ENCODE measurements at regions of chr6 and their contacts with region 1.

Region 1: DNA sequence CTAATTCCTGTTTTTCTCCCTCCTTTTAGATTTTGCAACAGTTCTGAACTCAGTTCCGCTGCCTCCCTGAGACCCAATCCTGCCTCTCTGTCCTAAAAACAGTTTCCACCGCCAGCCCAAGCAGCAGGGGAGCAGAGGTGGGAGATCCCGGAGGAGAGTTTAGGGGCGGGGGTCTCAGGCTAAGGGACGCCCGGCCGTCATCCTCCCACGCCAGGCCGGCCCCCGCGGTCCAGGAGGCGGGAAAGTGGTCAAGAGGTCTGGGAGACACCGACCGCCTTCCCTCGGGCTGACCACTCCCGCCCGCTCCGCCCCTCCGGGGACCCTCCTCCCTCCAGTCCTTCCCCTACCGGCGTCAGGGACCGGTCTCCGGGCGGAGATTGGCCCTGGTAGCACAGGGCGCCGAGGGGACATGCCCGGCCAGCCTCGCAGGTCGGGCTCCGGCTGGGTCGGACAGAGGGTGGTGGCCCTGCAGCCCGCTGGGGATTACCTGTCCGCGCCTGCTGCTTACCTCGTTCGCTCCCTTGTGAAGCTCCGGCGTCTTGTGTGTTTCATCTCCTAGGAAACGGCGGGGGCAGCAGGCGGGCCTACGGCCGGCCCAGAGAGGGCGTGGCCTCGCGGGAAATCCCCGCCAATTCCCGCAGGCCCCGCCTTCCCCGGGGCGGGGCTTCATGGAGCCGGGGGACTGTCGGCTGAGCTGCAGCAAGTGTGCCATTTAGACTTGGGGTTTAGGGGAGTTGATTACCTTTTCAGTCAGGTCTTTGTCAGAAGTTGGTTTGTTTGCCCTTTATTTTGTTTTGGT is at the start of gene MAK:
- DNase-seq: peak; percentile 88
- H3K4me3 Mint-ChIP-seq: peak within 1 kb of the TSS; percentile 85
- H3K27ac Mint-ChIP-seq: peak within 1 kb of the TSS; percentile 99
- H3K4me1 Mint-ChIP-seq: peaks cover 23% of the 10 kb centered on the region
- H3K27me3 Mint-ChIP-seq: peaks cover 32% of the 10 kb centered on the region
- total RNA-seq, gene MAK: 0.67 and 0.73 TPM in 2 replicates

Region 2: DNA sequence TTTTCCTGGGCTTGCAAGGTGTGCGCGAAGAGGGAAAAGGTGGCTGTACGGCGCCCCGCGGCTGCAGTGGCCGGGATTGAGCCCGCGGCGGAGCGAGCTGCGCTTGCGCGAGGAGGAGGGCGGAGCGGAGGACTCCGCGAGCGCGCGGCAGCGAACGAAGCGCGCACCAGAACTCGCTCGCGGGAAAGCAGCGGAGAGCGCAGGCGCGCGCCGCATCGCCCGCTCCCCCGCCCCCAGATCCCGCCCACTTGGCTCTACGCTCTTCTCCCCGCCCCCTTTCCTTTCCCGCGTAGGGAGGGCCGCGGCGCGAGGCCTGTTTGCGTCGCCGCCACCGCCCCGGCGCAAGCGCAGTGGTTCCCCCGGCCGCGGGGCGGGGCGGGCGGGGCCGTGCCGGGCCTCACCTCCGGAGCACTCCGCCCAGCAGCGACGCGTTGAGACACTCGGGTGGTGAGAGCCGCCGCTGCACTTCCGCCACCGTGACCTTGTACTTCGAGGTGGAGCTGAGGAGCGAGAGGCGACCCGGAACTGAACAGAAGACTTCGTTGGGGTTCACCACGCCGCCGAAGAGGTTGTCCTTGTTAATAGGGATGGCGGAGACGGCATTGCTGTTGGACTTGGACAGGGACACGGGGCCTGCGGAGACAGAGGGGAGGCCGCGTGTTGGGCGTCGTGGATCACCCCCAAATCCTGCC is 433.9 kb before region 1 on chr6:
- intact Hi-C with region 1: loop called (anchors 2 kb)
- DNase-seq: peak; percentile 89
- H3K4me3 Mint-ChIP-seq: peak overlapping the region; percentile 82
- H3K27ac Mint-ChIP-seq: peak overlapping the region; percentile 73
- H3K4me1 Mint-ChIP-seq: peaks cover 11% of the 10 kb centered on the region
- H3K27me3 Mint-ChIP-seq: peaks cover 71% of the 10 kb centered on the region

Region 3: GRCh38 chr6:10694302-10695085 is 143.7 kb before region 1 on chr6 and contains the starts of genes C6orf52 and PAK1IP1:
- intact Hi-C with region 1: loop called (anchors 1 kb)
- DNase-seq: peak; percentile 90
- H3K4me3 Mint-ChIP-seq: peak within 1 kb of the TSS; percentile 91
- H3K27ac Mint-ChIP-seq: peak within 1 kb of the TSS; percentile 99
- H3K4me1 Mint-ChIP-seq: peaks cover 49% of the 10 kb centered on the region
- H3K27me3 Mint-ChIP-seq: peaks cover 3% of the 10 kb centered on the region
- total RNA-seq, gene C6orf52: 3.6 and 6.0 TPM in 2 replicates
- total RNA-seq, gene PAK1IP1: 35.3 and 37.4 TPM in 2 replicates

Region 4: GRCh38 chr6:10747251-10747972 is 90.8 kb before region 1 on chr6 and contains the start of gene TMEM14B:
- intact Hi-C with region 1: loop called (anchors 1 kb)
- DNase-seq: peak; percentile 100
- H3K4me3 Mint-ChIP-seq: peak within 1 kb of the TSS; percentile 93
- H3K27ac Mint-ChIP-seq: peak within 1 kb of the TSS; percentile 94
- H3K4me1 Mint-ChIP-seq: peaks cover 52% of the 10 kb centered on the region
- H3K27me3 Mint-ChIP-seq: no peaks in the 10 kb centered on the region
- total RNA-seq, gene TMEM14B: 82.1 and 83.7 TPM in 2 replicates

Region 5: GRCh38 chr6:10873313-10873712 is 35.1 kb after region 1 on chr6:
- intact Hi-C with region 1: no loop called
- DNase-seq: no peak
- H3K4me3 Mint-ChIP-seq: no peak overlapping the region
- H3K27ac Mint-ChIP-seq: no peak overlapping the region
- H3K4me1 Mint-ChIP-seq: no peaks in the 10 kb centered on the region
- H3K27me3 Mint-ChIP-seq: peaks cover 8% of the 10 kb centered on the region

Region 6: GRCh38 chr6:11224252-11224965 is 386.2 kb after region 1 on chr6:
- intact Hi-C with region 1: loop called (anchors 2 kb)
- DNase-seq: peak; percentile 58
- H3K4me3 Mint-ChIP-seq: peak overlapping the region; percentile 65
- H3K27ac Mint-ChIP-seq: peak overlapping the region; percentile 87
- H3K4me1 Mint-ChIP-seq: peaks cover 80% of the 10 kb centered on the region
- H3K27me3 Mint-ChIP-seq: no peaks in the 10 kb centered on the region

Region 7: GRCh38 chr6:11537229-11538051 is 699.2 kb after region 1 on chr6 and contains the start of gene TMEM170B:
- intact Hi-C with region 1: loop called (anchors 2 kb)
- DNase-seq: peak; percentile 90
- H3K4me3 Mint-ChIP-seq: peak within 1 kb of the TSS; percentile 84
- H3K27ac Mint-ChIP-seq: peak within 1 kb of the TSS; percentile 68
- H3K4me1 Mint-ChIP-seq: peaks cover 17% of the 10 kb centered on the region
- H3K27me3 Mint-ChIP-seq: peaks cover 62% of the 10 kb centered on the region
- total RNA-seq, gene TMEM170B: 0.78 and 0.86 TPM in 2 replicates

Region 8: DNA sequence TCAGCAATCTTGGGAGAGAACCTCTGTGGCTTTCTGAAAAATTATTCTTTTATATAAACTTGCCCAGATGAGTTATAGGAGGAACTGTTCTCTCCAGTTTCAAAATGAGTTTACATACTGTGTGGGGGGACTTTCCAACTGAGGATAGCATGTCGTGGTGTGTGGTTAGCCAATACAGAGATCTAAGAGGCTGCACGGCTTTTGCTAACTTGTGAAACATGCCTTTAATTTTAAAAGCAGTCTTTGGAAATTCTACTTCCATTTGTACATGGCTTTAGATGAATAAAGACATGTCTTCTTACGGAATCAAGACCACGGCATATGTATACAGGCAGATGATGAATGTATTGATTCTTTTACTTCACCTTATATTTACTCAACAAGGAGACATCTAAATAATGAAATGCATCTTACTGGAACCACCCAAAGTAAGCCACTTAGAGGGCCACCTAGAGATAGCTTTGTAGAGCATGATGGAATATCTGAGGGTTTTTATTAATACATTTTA is 1213.7 kb after region 1 on chr6:
- intact Hi-C with region 1: loop called (anchors 2 kb)
- DNase-seq: peak; percentile 76
- H3K4me3 Mint-ChIP-seq: peak overlapping the region; percentile 78
- H3K27ac Mint-ChIP-seq: peak overlapping the region; percentile 96
- H3K4me1 Mint-ChIP-seq: peaks cover 77% of the 10 kb centered on the region
- H3K27me3 Mint-ChIP-seq: no peaks in the 10 kb centered on the region

Measured in activated T-helper 1 cell treated with anti-CD3 and anti-CD28 coated beads, Interleukin-12 subunit alpha, Interleukin-12 subunit beta, Interleukin-2, Interleukin-4 antibody, amounts not matched to agents 30 ng/mL and 10 ng/mL and 1 ng/mL, durations not matched to agents 14 hours and 24 hours and 36 hours (primary cell).